HCT116 (cell line): ENCODE measurements at regions of chr20 and their contacts with region 1.

Region 1: DNA sequence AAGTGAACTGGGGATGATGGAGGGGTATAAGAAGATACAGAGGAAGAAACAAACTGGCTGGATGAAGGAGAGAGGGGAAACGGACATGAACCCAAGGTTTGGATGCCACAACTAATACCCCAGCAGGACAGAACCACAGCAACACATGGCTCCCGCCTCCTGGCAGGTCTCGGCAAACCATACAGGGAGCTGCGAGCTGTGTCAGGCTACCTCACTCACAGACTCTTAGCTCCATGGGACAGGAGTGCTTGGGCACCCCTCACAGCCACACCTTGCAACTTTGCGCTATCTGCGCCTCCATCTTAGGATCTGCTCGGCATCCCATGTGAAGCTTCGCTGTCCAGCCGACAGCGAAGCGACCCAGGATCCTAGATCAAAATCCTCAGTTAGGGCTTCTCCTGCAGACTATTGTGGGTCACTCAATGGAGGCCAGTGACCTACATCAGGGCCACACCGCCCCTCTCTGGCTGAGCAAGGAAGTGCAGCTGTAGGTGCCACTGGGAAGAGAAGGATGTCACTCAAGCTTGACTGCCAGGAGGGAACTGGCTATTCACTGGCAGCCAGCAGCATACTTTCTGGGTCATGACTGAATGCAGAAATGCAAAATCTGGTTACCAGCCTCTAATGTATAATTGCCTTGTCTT is 174.4 kb upstream of the RIN2 start:
- DNase-seq: peak; percentile 13
- ATAC-seq: peak; percentile 85
- H3K4me3 ChIP-seq: no peak overlapping the region
- H3K27ac ChIP-seq: no peak overlapping the region
- H3K4me1 ChIP-seq: no peaks in the 10 kb centered on the region
- H3K27me3 ChIP-seq: peaks cover 40% of the 10 kb centered on the region
- CTCF ChIP-seq: peak; percentile 28 to 89 (median 87); a peak in 5 of 6 replicates
- POLR2A ChIP-seq: no peak
- RAD21 ChIP-seq: peak; percentile 65

Region 2: DNA sequence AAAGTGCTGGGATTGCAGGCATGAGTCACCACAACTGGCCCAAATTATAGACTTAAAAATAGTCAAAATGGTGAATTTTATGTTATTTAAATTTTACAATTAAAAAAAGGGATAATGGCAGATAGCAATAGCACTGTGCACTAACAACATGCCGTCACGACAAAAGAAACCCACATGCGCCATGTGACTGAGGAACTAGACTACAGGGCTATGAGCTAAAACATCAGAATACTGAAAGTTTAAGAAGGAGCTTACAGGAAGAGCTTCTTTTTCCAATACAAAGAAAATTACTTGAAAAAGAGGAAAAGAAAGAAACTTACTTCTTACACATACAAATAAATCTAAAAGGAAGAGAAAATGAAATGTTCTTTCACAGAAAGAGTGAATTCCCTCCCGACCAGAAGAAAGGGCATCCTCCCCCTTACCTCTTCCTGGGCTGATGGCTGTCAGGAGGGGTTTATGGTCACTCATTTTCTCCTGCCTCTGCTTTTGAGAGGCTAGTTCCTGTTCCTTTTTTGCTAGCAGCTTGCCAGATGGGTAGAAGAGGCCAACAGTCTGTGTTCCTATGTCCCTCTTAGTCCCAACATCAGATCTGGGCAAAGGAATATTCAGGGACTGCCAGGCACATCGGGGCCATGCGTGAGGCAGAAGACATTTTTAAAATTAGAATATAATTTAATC is 1171.3 kb before region 1 on chr20:
- CTCF ChIA-PET with region 1: interaction called, 4 read pairs
- POLR2A ChIA-PET with region 1: no interaction called
- RAD21 ChIA-PET with region 1: no interaction called
- intact Hi-C with region 1: loop called (anchors 10 kb)
- DNase-seq: no peak
- ATAC-seq: no peak
- H3K4me3 ChIP-seq: no peak overlapping the region
- H3K27ac ChIP-seq: no peak overlapping the region
- H3K4me1 ChIP-seq: no peaks in the 10 kb centered on the region
- H3K27me3 ChIP-seq: no peaks in the 10 kb centered on the region
- CTCF ChIP-seq: no peak
- POLR2A ChIP-seq: no peak
- RAD21 ChIP-seq: no peak

Region 3: DNA sequence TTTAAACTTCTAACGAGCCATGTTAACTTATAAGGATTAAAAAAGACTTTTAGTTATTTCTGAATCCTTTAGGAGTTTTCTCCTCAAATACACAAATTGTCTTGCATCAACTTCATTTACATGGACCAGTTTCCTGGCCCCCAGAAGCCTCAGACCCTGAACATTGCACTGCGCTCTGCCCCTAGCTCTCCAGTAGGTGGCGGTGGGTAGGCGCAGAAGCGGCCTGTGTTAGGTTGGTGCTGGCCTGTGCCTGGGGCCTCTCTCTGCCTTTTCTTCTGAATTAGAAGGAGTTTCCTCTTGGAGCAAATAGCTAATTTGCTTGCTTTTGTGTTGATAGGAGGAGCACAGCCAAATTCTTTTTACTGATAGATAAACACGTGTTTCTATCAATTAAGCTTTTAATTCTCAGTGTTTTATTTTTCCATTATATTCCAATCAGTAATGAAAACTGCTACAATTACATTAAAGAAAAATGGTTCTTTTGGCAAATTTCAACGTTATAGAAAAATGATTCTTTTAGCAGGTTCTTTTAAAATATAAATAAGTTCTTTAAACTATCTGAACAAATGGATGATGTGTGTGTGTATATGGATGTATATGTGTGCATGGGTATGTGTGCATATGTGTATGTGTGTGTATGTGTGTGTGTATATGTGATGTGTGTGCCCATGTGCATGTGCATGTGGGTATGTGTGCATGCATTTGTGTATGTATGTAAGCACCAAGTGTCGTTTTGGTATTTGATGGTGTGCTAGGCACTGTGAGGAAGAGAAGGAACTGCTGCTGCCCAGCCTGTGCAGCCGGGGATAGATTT is 951.3 kb before region 1 on chr20:
- CTCF ChIA-PET with region 1: interaction called, 4 read pairs
- POLR2A ChIA-PET with region 1: no interaction called
- RAD21 ChIA-PET with region 1: no interaction called
- intact Hi-C with region 1: loop called (anchors 2 kb)
- DNase-seq: peak; percentile 34
- ATAC-seq: peak; percentile 98
- H3K4me3 ChIP-seq: no peak overlapping the region
- H3K27ac ChIP-seq: no peak overlapping the region
- H3K4me1 ChIP-seq: no peaks in the 10 kb centered on the region
- H3K27me3 ChIP-seq: no peaks in the 10 kb centered on the region
- CTCF ChIP-seq: peak; percentile 39 to 95 (median 93); a peak in 5 of 6 replicates
- POLR2A ChIP-seq: no peak
- RAD21 ChIP-seq: peak; percentile 75

Region 4: DNA sequence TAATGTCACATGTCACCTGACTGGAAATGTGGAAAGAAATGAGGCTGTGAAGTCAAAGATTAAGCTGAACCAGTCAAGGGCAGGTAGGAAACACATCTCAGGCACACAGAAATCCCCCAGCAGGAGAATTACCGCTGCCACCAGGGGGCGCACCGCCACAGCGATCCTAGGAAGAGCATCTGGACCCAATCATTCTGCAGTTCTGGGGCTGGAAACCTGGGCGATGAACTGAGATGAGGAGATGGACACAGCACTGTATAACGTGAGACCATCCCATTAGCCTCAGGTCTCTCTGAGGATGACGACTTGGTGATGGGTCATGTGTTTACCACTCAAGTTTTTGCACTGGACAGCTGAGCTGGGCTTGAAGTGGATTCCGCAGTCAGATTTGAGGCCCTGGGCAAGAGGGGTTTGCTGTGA is 377.7 kb before region 1 on chr20:
- CTCF ChIA-PET with region 1: interaction called, 15 read pairs
- POLR2A ChIA-PET with region 1: no interaction called
- RAD21 ChIA-PET with region 1: no interaction called
- intact Hi-C with region 1: loop called (anchors 1 kb)
- DNase-seq: peak; percentile 22
- ATAC-seq: peak; percentile 76
- H3K4me3 ChIP-seq: no peak overlapping the region
- H3K27ac ChIP-seq: no peak overlapping the region
- H3K4me1 ChIP-seq: no peaks in the 10 kb centered on the region
- H3K27me3 ChIP-seq: no peaks in the 10 kb centered on the region
- CTCF ChIP-seq: peak; percentile 19 to 95 (median 80); a peak in 5 of 6 replicates
- POLR2A ChIP-seq: no peak
- RAD21 ChIP-seq: peak; percentile 56

Region 5: GRCh38 chr20:19275630-19276072 is 308.0 kb before region 1 on chr20:
- CTCF ChIA-PET with region 1: no interaction called
- POLR2A ChIA-PET with region 1: no interaction called
- RAD21 ChIA-PET with region 1: no interaction called
- intact Hi-C with region 1: no loop called
- DNase-seq: no peak
- ATAC-seq: no peak
- H3K4me3 ChIP-seq: no peak overlapping the region
- H3K27ac ChIP-seq: no peak overlapping the region
- H3K4me1 ChIP-seq: no peaks in the 10 kb centered on the region
- H3K27me3 ChIP-seq: no peaks in the 10 kb centered on the region
- CTCF ChIP-seq: no peak
- POLR2A ChIP-seq: no peak
- RAD21 ChIP-seq: no peak

Region 6: DNA sequence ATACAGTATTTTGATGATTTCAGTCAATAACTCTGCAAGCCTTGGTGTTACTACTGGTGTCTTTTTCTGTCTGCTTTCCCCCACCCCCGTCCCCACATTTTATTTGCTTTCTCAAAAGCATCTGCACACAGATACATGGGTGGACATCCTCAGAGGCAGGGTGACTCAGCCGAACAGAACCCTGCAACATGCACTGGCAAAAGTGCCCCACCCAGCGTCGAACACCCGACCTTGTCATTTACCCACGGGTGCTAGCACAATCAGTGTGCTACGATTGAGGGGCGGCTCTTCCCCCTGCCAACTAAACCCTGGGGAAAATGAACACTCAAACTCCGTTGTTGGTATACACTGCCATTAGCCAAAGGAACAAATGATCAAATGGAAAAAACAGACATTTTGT is 317.6 kb after region 1 on chr20:
- CTCF ChIA-PET with region 1: no interaction called
- POLR2A ChIA-PET with region 1: no interaction called
- RAD21 ChIA-PET with region 1: no interaction called
- intact Hi-C with region 1: no loop called
- DNase-seq: no peak
- ATAC-seq: no peak
- H3K4me3 ChIP-seq: no peak overlapping the region
- H3K27ac ChIP-seq: no peak overlapping the region
- H3K4me1 ChIP-seq: peaks cover 0 to 5% of the 10 kb centered on the region in 2 experiments; a peak in 1 of 4 replicates
- H3K27me3 ChIP-seq: no peaks in the 10 kb centered on the region
- CTCF ChIP-seq: no peak
- POLR2A ChIP-seq: no peak
- RAD21 ChIP-seq: no peak